PC-9 (cell line): ENCODE measurements at regions of chr3 and their contacts with region 1.

Region 1: DNA sequence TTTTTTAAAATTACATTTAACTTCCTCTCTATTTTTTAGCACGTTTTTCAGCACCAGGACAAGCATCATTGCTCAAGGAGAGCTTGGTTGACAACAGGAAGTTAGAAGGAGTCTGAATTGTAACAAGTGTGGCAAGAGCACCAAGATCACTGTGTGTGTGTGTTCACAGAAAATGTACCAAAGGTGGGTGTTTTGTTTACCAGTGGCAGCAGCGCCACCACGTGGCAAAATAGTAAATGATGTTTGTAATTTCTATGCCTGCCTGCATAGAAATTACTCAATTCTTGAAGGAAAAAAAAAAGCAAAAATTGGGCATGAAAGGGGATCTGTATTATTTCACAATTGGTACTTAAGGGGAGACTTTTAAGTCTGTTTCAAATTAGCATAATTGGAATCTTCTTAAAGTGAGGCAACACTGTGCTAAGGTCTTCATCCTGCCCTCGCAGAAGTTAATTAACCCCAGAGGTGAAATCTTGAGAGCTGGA is 7.4 kb upstream of the U2SURP start:
- DNase-seq: peak; percentile 67 to 70
- H3K4me3 ChIP-seq: no peak overlapping the region
- H3K27ac ChIP-seq: no peak overlapping the region
- H3K4me1 ChIP-seq: peaks cover 21% of the 10 kb centered on the region
- H3K27me3 ChIP-seq: no peaks in the 10 kb centered on the region
- CTCF ChIP-seq: peak; percentile 85

Region 2: GRCh38 chr3:142366436-142366835 is 627.6 kb before region 1 on chr3:
- CTCF ChIA-PET with region 1: no interaction called
- POLR2A ChIA-PET with region 1: no interaction called
- intact Hi-C with region 1: loop called (anchors 5 kb)
- DNase-seq: no peak
- H3K4me3 ChIP-seq: no peak overlapping the region
- H3K27ac ChIP-seq: no peak overlapping the region
- H3K4me1 ChIP-seq: no peaks in the 10 kb centered on the region
- H3K27me3 ChIP-seq: no peaks in the 10 kb centered on the region
- CTCF ChIP-seq: peak; percentile 62

Region 3: DNA sequence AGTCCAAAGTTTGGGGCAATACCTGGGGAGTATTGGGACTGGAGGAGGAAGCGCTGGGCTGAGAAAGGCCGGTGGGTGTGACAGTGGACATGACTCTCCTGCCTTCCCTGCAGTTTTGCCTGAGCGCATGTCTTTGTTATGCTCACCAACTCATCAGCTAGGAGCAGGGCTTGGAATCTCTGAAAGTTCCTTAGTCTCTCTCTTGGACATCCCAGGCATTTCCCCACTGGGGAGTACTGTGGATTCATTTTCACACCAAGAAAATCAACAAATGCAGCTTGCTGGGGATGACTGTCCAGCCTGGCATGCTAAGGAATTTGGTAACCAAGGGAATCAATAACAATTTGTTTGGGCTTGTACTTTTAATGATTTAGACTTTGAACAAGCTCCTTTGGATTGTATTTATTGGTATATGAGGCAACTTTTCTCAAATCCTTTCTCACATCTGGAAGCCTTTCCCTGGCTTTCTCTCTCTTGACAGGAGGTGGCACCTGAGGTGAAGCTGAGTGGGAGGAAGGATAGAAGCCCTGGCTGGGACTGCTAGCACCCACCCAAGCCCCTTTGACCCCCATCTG is 77.1 kb after region 1 on chr3:
- CTCF ChIA-PET with region 1: no interaction called
- POLR2A ChIA-PET with region 1: no interaction called
- intact Hi-C with region 1: no loop called
- DNase-seq: peak in 1 of 2 experiments; percentile 38
- H3K4me3 ChIP-seq: no peak overlapping the region
- H3K27ac ChIP-seq: no peak overlapping the region
- H3K4me1 ChIP-seq: no peaks in the 10 kb centered on the region
- H3K27me3 ChIP-seq: no peaks in the 10 kb centered on the region
- CTCF ChIP-seq: no peak